ENCODE measurements at regions of chr18 and their contacts with region 1.

Region 1: DNA sequence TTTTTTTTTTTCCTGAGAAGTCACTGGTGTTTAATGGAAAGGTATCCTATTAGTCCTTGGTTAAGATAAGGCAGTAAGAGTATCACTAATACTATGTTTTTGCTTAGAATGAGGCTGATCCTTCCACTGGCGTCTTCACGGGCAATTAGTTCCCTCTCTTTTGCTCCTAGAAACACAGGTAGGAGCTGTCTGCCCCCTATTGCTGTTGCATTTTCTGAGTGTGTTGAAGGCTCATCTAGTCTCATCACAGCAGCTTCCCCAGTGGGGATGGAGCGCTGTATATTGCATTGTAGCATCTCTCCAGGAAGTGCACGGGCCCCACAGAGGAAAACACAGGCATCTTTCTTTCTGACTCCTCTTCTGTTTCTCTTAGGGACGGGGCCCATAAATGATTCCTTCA is 145.0 kb downstream of the NAPG start:
- DNase-seq: no peak
- ATAC-seq: no peak
- H3K4me3 ChIP-seq: no peak overlapping the region
- H3K27ac ChIP-seq: no peak overlapping the region
- H3K4me1 ChIP-seq: no peaks in the 10 kb centered on the region
- H3K27me3 ChIP-seq: no peaks in the 10 kb centered on the region
- CTCF ChIP-seq: no peak
- POLR2A ChIP-seq: no peak

Region 2: DNA sequence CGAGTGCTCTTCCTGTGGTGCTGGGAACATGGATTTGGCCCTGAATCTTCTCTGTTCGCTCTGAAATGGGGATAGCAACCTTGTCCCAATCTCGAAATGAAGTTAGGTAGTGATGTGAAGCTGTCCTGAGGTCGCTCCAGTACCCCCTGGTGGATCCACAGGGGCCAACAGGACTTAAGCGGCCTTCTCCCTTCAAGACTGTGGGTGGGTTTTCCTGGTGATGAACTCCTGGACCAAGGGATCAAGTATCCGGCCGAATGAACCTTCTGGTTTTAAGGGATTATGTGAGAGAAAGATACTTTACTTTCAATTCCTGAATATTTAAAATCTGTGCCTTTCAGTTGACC is 11.5 kb after region 1 on chr18:
- intact Hi-C with region 1: no loop called
- DNase-seq: no peak
- ATAC-seq: no peak
- H3K4me3 ChIP-seq: no peak overlapping the region
- H3K27ac ChIP-seq: no peak overlapping the region
- H3K4me1 ChIP-seq: no peaks in the 10 kb centered on the region
- H3K27me3 ChIP-seq: no peaks in the 10 kb centered on the region
- CTCF ChIP-seq: no peak
- POLR2A ChIP-seq: no peak

Region 3: GRCh38 chr18:10739152-10739551 is 68.3 kb after region 1 on chr18:
- intact Hi-C with region 1: loop called in 1 of 10 experiments (anchors 10 kb)
- DNase-seq: no peak
- ATAC-seq: no peak
- H3K4me3 ChIP-seq: no peak overlapping the region
- H3K27ac ChIP-seq: no peak overlapping the region
- H3K4me1 ChIP-seq: no peaks in the 10 kb centered on the region
- H3K27me3 ChIP-seq: no peaks in the 10 kb centered on the region
- CTCF ChIP-seq: no peak
- POLR2A ChIP-seq: no peak

Measured in heart left ventricle (tissue), 16 donors.